Panc1 (cell line): ENCODE measurements at regions of chr1 and their contacts with region 1.

Region 1: DNA sequence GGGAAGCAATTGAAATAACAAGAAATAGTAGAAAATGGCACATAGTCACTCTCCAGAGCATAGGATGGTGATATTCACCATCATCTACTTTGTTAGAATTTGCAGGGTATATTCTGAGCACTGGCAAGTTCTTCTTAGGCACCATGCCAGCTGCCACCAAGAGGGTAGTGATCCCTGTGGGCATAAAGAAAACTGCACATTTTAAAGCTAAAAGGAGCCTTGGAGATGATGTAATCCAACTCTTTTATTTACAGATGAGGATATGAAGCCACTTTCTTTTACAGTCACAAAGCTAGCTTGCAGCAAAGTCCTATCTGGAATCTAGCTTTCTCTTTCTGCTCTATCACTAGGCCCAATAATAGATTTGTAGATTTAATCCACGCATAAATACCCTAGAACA is 69.0 kb downstream of the PTGER3 start:
- DNase-seq: no peak
- ATAC-seq: no peak
- H3K4me3 ChIP-seq: no peak overlapping the region
- H3K27ac ChIP-seq: no peak overlapping the region
- H3K4me1 ChIP-seq: no peaks in the 10 kb centered on the region
- H3K27me3 ChIP-seq: no peaks in the 10 kb centered on the region
- CTCF ChIP-seq: no peak

Region 2: GRCh38 chr1:70966018-70966638 is 12.5 kb before region 1 on chr1:
- CTCF ChIA-PET with region 1: interaction called, 4 read pairs
- POLR2A ChIA-PET with region 1: no interaction called
- in situ Hi-C with region 1: no loop called
- intact Hi-C with region 1: loop called (anchors 1 kb)
- DNase-seq: no peak
- ATAC-seq: no peak
- H3K4me3 ChIP-seq: no peak overlapping the region
- H3K27ac ChIP-seq: no peak overlapping the region
- H3K4me1 ChIP-seq: no peaks in the 10 kb centered on the region
- H3K27me3 ChIP-seq: no peaks in the 10 kb centered on the region
- CTCF ChIP-seq: peak; percentile 29; the same call in 1 of the 2 replicates

Region 3: DNA sequence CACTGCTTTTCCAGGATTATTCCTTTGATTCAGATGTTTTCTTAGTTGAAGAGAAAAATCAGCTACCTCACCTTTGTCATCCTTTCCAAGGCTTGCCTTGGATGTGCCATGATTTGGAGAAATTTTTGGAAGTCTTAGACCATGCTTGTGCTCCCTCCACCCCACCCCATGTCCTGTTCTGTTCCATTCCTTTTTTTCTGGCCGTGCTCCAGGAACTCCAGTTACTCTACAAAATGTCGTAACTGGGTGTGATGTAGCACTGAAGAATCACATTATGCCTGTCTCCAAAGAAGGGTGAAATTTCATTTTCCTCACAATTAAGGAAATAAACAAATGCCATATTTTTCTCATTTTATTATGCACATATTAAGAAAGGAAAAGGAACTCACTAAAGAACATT is 320.0 kb after region 1 on chr1:
- CTCF ChIA-PET with region 1: no interaction called
- POLR2A ChIA-PET with region 1: no interaction called
- in situ Hi-C with region 1: no loop called
- intact Hi-C with region 1: no loop called
- DNase-seq: no peak
- ATAC-seq: no peak
- H3K4me3 ChIP-seq: no peak overlapping the region
- H3K27ac ChIP-seq: no peak overlapping the region
- H3K4me1 ChIP-seq: no peaks in the 10 kb centered on the region
- H3K27me3 ChIP-seq: no peaks in the 10 kb centered on the region
- CTCF ChIP-seq: no peak